Activated naive CD4-positive, alpha-beta T cell treated with anti-CD3 and anti-CD28 coated beads for 36 hours (primary cell): ENCODE measurements at regions of chr9 and their contacts with region 1.

Region 1: DNA sequence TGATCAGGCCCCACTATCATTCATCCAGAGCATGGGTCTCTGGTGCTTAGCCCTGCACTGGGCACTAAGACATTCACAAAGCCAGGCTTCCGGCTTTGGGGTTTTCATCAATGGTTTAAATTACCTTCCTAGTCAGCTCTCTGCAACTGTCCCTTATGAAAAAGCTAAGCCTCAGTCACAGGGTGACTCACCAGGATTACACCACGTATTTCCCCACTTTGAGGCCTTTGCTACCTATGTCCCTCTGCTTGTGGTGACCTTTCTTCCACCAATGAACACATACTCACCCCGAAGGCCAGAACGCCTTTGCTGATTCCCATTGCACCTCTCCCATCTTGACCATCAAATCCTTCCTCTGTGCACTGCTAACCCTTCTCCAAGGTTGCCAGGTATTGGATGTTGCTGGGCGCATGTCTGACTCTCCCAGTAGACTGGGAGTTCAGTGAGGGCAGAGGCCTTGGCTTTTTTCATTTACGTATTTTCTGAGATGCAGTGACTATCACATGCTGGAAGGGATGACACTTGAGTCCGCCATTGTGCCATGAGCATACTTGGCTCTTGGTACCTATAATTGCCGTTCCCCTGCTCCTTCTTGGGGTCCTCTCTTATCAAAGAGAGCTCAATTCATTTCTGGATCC is 58.7 kb upstream of the TNFSF8 start:
- DNase-seq: peak; percentile 74
- H3K4me3 Mint-ChIP-seq: peak overlapping the region; percentile 47
- H3K27ac Mint-ChIP-seq: peak overlapping the region; percentile 96
- H3K4me1 Mint-ChIP-seq: peaks cover 61% of the 10 kb centered on the region
- H3K27me3 Mint-ChIP-seq: no peaks in the 10 kb centered on the region

Region 2: DNA sequence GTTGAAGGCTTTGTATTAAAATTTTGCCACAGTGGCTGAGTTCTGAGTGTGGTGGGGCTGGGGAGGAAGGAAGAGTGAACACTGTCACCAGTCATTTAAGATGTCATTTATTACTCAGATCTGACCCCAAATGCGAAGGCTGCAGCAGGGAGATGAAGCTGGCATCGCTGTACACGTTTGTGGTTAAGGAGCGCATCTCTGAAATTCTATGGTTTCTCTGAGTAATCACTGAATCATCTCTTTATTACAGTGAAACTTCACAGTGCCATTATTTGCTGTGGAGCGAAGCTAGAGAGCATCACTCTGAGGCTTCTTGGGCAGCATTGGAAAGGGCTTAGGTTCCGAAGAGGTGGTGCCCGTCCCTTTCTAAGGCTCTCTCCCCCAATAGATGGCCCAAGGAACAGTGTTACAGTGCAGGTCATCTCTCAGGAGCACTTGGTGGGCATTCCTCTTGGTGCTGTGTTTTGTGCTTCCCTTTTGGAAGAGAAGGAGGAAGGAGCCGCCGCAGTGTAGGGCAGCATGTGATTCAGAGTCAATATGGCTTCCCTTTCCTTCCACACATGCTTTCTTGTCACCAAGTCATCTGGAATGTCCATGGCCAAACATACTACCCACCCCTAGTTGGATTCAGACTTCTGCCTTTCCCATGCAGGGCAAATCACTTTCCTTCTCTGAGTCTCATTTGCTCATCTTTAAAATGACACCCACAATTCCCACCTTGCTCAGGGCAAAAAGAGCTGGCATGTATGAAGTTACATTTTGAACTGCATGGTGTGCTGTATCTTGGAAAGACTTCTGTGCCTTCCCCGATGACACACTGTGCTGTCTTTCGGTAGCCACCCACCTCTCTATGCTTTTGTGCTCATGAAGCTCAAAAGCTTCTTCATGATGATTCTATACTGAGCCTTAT is 297.8 kb before region 1 on chr9:
- CTCF ChIA-PET with region 1: interaction called, 6 read pairs
- intact Hi-C with region 1: loop called (anchors 1 kb)
- DNase-seq: peak; percentile 89
- H3K4me3 Mint-ChIP-seq: peak overlapping the region; percentile 8
- H3K27ac Mint-ChIP-seq: peak overlapping the region; percentile 94
- H3K4me1 Mint-ChIP-seq: peaks cover 82% of the 10 kb centered on the region
- H3K27me3 Mint-ChIP-seq: no peaks in the 10 kb centered on the region

Region 3: DNA sequence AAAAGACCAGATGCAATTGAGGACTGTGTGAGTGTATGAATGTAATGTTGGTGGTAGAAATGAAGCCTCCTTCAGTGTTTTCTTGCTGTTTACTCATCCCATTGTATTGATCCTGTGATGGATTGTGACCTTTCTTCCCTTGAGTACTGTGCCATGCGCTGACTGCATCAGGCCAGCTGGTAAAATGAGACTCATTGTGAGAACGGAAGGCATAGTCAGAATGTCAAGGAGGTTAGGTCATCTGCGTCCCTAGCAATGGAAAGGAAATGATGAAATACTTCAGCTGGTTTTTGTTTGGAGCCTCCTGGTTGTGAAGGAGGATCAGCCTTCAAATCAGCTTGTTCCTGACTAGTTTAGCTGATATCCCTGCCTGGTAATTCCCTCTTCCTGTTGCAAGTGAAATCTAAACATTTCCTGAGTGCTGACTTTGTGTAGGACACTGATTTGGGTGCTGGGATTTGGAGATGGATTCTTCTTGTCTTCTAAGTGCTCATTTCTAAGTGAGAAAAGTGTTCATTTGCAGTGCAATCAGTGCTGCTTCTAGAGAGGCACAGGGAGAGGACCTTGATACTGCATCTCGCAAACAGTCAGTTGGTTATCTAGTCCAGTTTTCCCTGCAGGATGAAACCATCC is 94.2 kb before region 1 on chr9:
- CTCF ChIA-PET with region 1: interaction called, 6 read pairs
- intact Hi-C with region 1: loop called (anchors 1 kb)
- DNase-seq: peak; percentile 80
- H3K4me3 Mint-ChIP-seq: no peak overlapping the region
- H3K27ac Mint-ChIP-seq: peak overlapping the region; percentile 85
- H3K4me1 Mint-ChIP-seq: peaks cover 56% of the 10 kb centered on the region
- H3K27me3 Mint-ChIP-seq: no peaks in the 10 kb centered on the region

Region 4: GRCh38 chr9:114930056-114930812 is 58.8 kb before region 1 on chr9 and contains the start of gene TNFSF8:
- CTCF ChIA-PET with region 1: interaction called, 7 read pairs
- intact Hi-C with region 1: loop called (anchors 1 kb)
- DNase-seq: peak; percentile 90
- H3K4me3 Mint-ChIP-seq: peak within 1 kb of the TSS; percentile 94
- H3K27ac Mint-ChIP-seq: peak within 1 kb of the TSS; percentile 97
- H3K4me1 Mint-ChIP-seq: peaks cover 38% of the 10 kb centered on the region
- H3K27me3 Mint-ChIP-seq: no peaks in the 10 kb centered on the region
- total RNA-seq, gene TNFSF8: 25.9 to 26.4 TPM

Region 5: GRCh38 chr9:114945616-114946412 is 43.3 kb before region 1 on chr9:
- CTCF ChIA-PET with region 1: no interaction called
- intact Hi-C with region 1: no loop called
- DNase-seq: no peak
- H3K4me3 Mint-ChIP-seq: no peak overlapping the region
- H3K27ac Mint-ChIP-seq: no peak overlapping the region
- H3K4me1 Mint-ChIP-seq: peaks cover 17% of the 10 kb centered on the region
- H3K27me3 Mint-ChIP-seq: no peaks in the 10 kb centered on the region

Region 6: DNA sequence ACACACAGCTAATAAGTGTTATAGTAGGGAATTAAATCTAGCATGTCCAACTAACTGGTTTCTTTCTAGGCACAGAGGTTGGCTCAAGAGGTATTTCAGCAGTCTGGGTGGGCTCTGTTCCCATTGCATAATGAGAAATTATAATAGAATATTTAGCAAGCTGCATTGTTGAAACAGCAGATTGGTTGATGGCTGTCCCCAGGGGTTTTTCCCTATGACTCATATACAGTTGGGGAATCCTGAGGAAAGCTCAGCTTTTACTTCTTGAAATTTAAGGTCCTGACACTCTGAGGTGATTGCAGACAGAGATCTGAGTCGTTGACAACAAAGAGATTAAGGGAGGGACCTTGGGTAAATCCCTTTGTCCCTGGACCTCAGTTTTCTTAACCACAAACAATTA is 20.4 kb before region 1 on chr9:
- CTCF ChIA-PET with region 1: interaction called, 3 read pairs
- intact Hi-C with region 1: loop called (anchors 1 kb)
- DNase-seq: peak; percentile 48
- H3K4me3 Mint-ChIP-seq: no peak overlapping the region
- H3K27ac Mint-ChIP-seq: peak overlapping the region; percentile 3
- H3K4me1 Mint-ChIP-seq: peaks cover 34% of the 10 kb centered on the region
- H3K27me3 Mint-ChIP-seq: no peaks in the 10 kb centered on the region

Region 7: DNA sequence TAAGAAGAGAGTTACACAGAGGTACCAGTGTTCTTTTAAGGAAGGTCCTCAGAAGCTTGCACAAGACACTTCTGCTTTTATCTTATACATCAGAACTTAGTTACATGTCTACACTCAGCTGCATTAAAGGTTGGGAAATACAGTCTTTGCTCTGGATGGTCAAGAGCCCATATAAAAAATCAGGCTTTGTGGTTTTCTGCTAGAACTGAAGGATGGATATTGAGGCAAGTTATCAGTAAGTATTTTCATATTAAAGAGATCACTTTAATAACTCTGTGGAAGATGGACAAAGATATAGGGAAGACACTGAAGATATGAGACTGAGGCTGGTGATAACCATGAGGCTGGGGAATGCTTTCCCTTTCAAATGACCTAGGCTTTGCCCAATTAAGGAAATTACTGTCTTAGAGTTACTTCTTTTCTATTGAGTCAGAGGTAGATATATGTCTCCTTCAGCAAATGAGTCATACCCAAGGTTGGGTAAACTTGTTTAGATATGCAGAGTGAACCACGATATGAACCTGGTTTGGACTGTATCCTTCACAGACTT is 215.9 kb after region 1 on chr9:
- CTCF ChIA-PET with region 1: no interaction called
- intact Hi-C with region 1: loop called (anchors 1 kb)
- DNase-seq: no peak
- H3K4me3 Mint-ChIP-seq: no peak overlapping the region
- H3K27ac Mint-ChIP-seq: no peak overlapping the region
- H3K4me1 Mint-ChIP-seq: peaks cover 15% of the 10 kb centered on the region
- H3K27me3 Mint-ChIP-seq: peaks cover 33% of the 10 kb centered on the region